ENCODE measurements at regions of chr1 and their contacts with region 1.

Region 1: DNA sequence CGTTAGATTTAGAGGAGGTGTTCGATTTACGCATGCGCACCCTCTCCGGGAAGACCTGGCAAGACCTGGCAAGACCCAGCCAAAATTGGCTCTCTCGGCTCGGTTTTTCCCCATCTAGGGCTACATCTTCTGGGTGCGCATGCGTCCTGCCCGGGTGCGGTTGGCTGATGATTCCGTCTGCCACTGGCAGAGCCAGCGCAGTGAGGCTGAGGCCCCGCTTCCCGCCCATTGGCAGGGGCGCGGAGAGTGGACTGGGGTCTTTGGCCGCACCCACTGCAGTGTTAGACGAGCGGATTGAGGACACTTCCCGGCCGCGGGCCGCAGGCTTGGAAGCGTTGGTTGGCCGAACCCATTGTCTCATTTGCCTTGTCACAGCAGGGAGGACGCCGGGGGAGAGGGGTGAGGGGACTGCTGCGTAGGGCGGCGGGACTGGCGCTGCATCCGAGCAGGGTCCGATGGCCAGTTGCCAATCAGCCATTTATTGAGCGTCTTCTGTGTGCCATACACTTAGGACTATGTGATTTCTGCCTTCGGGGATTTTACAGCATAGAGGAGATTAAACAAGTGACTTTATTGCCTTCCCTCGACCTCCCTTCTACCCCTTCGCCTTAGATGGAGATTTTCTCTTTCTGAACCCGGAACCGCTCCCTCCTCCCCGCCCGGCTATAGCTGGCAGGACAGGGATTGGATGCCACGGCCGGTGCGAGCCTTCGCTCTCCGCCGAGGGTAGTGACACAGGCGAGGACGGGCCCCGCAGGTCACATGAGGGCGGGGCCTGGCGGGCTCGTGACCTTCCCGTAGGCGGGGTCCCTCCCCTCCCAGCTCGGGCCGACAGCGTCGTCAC is 43.7 kb downstream of the MEF2D start:
- DNase-seq: peak; percentile 98
- H3K4me3 ChIP-seq: peak overlapping the region; percentile 67 to 78
- H3K27ac ChIP-seq: peak overlapping the region; percentile 98 to 100
- H3K4me1 ChIP-seq: peaks cover 4% of the 10 kb centered on the region
- H3K27me3 ChIP-seq: no peaks in the 10 kb centered on the region
- CTCF ChIP-seq: peak in 1 of 3 experiments; percentile 18
- POLR2A ChIP-seq: peak; percentile 64

Region 2: GRCh38 chr1:156394835-156395461 is 61.9 kb before region 1 on chr1:
- intact Hi-C with region 1: no loop called
- DNase-seq: no peak
- H3K4me3 ChIP-seq: no peak overlapping the region
- H3K27ac ChIP-seq: no peak overlapping the region
- H3K4me1 ChIP-seq: no peaks in the 10 kb centered on the region
- H3K27me3 ChIP-seq: no peaks in the 10 kb centered on the region
- CTCF ChIP-seq: no peak
- POLR2A ChIP-seq: no peak

Region 3: DNA sequence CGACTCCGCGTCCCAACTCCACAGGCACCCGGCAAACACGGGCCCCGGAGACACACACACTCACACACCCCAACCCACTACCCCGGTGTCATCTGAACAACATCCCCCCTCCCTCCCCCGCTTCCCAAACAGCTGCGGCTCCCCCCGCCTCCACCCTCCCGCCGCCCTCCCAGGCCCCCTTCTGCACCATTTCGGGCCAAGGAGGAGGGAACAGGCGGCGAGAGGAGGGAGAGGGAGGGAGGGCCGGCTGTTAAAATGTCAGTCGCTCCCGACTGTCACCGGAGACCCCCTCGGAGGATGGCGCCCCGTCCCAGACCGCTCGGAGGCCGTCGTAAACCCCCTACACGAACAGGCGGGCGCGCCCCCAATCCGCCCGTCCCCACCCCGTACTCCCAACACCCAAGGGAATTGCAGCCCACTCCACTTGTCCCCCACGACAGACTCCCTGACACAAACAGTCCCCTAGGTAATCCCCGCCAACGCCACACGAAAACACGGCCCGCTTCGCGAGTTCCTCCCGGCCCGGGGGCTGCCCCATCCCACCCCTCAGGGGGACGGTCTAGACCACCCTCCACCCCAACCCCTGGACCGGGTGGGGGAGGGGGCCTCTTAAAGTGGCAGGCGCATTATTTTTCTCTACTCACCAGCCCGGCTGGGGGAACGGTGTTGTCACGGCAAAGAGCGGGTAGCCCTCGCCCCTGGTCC is 43.1 kb after region 1 on chr1:
- intact Hi-C with region 1: loop called (anchors 5 kb)
- DNase-seq: peak; percentile 65
- H3K4me3 ChIP-seq: peak overlapping the region; percentile 99 to 100
- H3K27ac ChIP-seq: peak overlapping the region; percentile 98 to 100
- H3K4me1 ChIP-seq: peaks cover 72% of the 10 kb centered on the region
- H3K27me3 ChIP-seq: no peaks in the 10 kb centered on the region
- CTCF ChIP-seq: no peak
- POLR2A ChIP-seq: no peak

Region 4: GRCh38 chr1:156601122-156601830 is 144.4 kb after region 1 on chr1 and contains the start of gene GPATCH4:
- intact Hi-C with region 1: loop called (anchors 10 kb)
- DNase-seq: peak; percentile 95
- H3K4me3 ChIP-seq: peak within 1 kb of the TSS; percentile 62 to 81
- H3K27ac ChIP-seq: peak within 1 kb of the TSS; percentile 65 to 83
- H3K4me1 ChIP-seq: peaks cover 7% of the 10 kb centered on the region
- H3K27me3 ChIP-seq: no peaks in the 10 kb centered on the region
- CTCF ChIP-seq: no peak
- POLR2A ChIP-seq: no peak
- total RNA-seq, gene GPATCH4: 21.6 to 26.7 TPM

Region 5: GRCh38 chr1:156641761-156642264 is 185.0 kb after region 1 on chr1 and contains the start of gene BCAN:
- intact Hi-C with region 1: no loop called
- DNase-seq: peak; percentile 54
- H3K4me3 ChIP-seq: peak within 1 kb of the TSS; percentile 32 to 60
- H3K27ac ChIP-seq: no peak within 1 kb of the TSS
- H3K4me1 ChIP-seq: peaks cover 15% of the 10 kb centered on the region
- H3K27me3 ChIP-seq: no peaks in the 10 kb centered on the region
- CTCF ChIP-seq: no peak
- POLR2A ChIP-seq: no peak
- total RNA-seq, gene BCAN: 8.8 to 9.7 TPM